HCT116 (cell line): ENCODE measurements at regions of chr5 and their contacts with region 1.

Region 1: GRCh38 chr5:176619203-176619568 is 9.2 kb upstream of the GPRIN1 start:
- DNase-seq: peak; percentile 79
- ATAC-seq: peak; percentile 99
- H3K4me3 ChIP-seq: peak overlapping the region; percentile 30 to 37
- H3K27ac ChIP-seq: no peak overlapping the region
- H3K4me1 ChIP-seq: peaks cover 15 to 27% of the 10 kb centered on the region in 2 experiments
- H3K27me3 ChIP-seq: no peaks in the 10 kb centered on the region
- CTCF ChIP-seq: peak; percentile 58 to 81 (median 70)
- POLR2A ChIP-seq: no peak
- RAD21 ChIP-seq: peak; percentile 95

Region 2: DNA sequence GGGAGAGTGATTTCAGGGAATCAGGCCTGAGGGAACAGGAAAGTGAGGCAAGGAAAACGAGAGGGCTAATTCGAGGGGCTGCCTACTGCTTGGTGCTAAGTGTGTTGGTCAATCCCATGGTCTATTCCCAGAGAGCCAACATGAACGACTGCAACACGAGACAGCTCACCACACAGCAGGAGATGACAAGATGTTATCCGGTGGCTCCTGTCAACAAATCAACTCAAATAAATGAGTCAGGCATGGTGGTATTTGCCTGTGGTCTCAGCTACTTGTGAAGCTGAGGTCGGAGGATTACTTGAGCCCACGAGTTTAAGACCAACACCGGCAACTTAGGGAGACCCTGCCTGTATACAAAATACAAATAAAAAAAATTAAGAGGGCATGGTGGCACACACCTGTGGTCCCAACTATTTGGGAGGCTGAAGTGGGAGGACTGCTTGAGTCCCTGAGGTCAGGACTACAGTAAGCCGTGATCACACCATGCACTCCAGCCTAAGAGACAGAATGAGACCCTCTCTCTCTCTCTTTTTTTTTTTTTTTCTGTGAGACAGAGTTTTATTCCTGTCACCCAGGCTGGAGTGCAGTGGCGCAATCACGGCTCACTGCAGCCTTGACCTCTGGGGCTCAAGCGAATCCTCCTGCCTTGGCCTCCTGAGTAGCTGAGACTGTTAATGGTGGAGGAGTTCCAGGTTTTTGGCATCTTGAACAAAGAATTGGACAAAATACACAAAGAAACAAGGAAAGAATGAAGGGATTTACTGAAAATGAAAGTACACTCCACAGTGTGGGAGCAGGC is 180.0 kb before region 1 on chr5:
- CTCF ChIA-PET with region 1: no interaction called
- POLR2A ChIA-PET with region 1: no interaction called
- RAD21 ChIA-PET with region 1: interaction called in 1 of 2 experiments, 13 read pairs
- intact Hi-C with region 1: no loop called
- DNase-seq: no peak
- ATAC-seq: peak; percentile 57; the same call in 1 of the 2 replicates
- H3K4me3 ChIP-seq: no peak overlapping the region
- H3K27ac ChIP-seq: no peak overlapping the region
- H3K4me1 ChIP-seq: peaks cover 0 to 7% of the 10 kb centered on the region in 2 experiments; a peak in 2 of 4 replicates
- H3K27me3 ChIP-seq: no peaks in the 10 kb centered on the region
- CTCF ChIP-seq: no peak
- POLR2A ChIP-seq: no peak
- RAD21 ChIP-seq: no peak

Region 3: GRCh38 chr5:176573564-176574296 is 45.5 kb before region 1 on chr5:
- CTCF ChIA-PET with region 1: interaction called, 3 read pairs
- POLR2A ChIA-PET with region 1: no interaction called
- RAD21 ChIA-PET with region 1: no interaction called
- intact Hi-C with region 1: loop called (anchors 1 kb)
- DNase-seq: peak; percentile 32
- ATAC-seq: peak; percentile 83
- H3K4me3 ChIP-seq: no peak overlapping the region
- H3K27ac ChIP-seq: no peak overlapping the region
- H3K4me1 ChIP-seq: peaks cover 0 to 18% of the 10 kb centered on the region in 2 experiments; a peak in 2 of 4 replicates
- H3K27me3 ChIP-seq: no peaks in the 10 kb centered on the region
- CTCF ChIP-seq: peak; percentile 81 to 89 (median 88)
- POLR2A ChIP-seq: no peak
- RAD21 ChIP-seq: peak; percentile 90

Region 4: DNA sequence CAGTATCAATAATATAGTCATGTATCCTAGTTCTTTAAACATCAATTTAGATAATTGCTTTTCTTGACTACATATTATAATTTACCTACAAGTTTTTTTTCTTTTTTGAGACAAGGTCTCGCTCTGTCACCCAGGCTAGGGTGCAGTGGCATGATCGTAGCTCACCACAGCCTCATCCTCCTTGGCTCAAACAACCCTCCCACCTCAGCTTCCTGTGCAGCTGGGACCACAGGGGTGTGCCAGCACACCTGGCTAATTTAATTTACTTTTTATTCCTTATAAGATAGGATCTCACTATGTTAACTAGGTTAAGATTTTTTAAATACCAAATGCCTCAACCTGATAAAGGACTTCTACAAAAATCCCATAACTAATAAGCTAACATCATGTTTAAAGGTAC is 366.3 kb after region 1 on chr5:
- CTCF ChIA-PET with region 1: no interaction called
- POLR2A ChIA-PET with region 1: no interaction called
- RAD21 ChIA-PET with region 1: no interaction called
- intact Hi-C with region 1: no loop called
- DNase-seq: no peak
- ATAC-seq: no peak
- H3K4me3 ChIP-seq: no peak overlapping the region
- H3K27ac ChIP-seq: no peak overlapping the region
- H3K4me1 ChIP-seq: no peaks in the 10 kb centered on the region
- H3K27me3 ChIP-seq: no peaks in the 10 kb centered on the region
- CTCF ChIP-seq: no peak
- POLR2A ChIP-seq: no peak
- RAD21 ChIP-seq: no peak